AG04450 (cell line): ENCODE measurements at regions of chr18 and their contacts with region 1.

Region 1: DNA sequence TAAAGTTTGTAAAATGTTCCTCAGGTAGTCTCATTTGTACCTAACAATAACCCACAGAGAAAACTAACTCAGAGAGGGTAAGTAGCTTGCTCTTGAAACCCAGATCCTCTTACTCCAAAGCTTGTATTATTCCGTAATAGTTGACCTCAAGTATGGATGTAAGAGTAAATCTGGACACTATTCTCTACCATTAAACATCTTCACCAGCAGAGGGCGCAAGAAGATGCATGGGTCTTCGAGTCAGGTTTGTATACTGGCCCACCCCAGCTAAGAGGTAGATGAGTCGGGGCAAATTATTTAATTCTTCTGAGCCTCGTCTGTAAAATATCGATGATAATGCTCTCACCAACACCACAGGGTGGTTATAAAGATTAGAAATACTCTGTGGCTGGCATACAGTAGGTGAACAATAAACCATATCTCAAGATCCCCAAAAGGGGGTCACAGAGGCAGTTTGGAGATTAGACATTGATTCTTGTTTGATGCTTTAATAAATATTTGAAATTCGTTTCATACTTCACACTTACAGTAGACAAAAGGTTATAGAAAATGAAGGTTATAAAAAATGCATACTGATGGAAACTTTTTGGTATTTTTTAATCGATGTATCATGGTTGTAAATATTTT is 3.5 kb upstream of the CABLES1 start:
- DNase-seq: peak; percentile 56
- H3K4me3 ChIP-seq: no peak overlapping the region
- H3K27ac ChIP-seq: no peak overlapping the region
- H3K27me3 ChIP-seq: no peaks in the 10 kb centered on the region
- CTCF ChIP-seq: peak; percentile 80

Region 2: DNA sequence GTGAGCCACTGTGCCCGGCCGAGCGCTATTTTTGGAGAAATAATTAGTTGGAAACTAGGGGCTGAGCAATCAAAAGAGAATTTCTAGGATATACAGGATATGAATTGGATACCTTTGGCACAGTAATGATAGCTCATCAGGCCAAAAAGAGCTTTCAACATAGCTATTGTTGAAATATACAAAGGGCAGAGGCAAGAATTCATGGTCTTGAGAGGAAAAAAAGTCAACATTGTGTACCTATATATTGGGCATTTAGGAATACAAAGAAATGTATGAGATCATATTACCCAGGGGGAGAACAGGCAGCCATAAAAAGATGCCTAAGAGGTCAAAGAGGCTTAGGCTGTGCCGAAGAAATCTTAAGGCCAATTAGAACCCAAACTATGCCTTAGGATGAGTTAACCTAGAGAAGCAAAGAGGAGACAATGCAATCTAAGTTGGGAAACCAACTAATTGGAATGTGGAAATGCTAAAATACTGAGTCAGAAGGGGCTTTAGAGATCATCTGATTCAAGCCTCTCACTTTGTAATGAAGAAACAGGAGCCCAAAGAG is 99.7 kb before region 1 on chr18:
- CTCF ChIA-PET with region 1: interaction called, 30 read pairs
- POLR2A ChIA-PET with region 1: no interaction called
- DNase-seq: peak; percentile 58
- H3K4me3 ChIP-seq: no peak overlapping the region
- H3K27ac ChIP-seq: peak overlapping the region; percentile 81
- H3K27me3 ChIP-seq: no peaks in the 10 kb centered on the region
- CTCF ChIP-seq: no peak

Region 3: DNA sequence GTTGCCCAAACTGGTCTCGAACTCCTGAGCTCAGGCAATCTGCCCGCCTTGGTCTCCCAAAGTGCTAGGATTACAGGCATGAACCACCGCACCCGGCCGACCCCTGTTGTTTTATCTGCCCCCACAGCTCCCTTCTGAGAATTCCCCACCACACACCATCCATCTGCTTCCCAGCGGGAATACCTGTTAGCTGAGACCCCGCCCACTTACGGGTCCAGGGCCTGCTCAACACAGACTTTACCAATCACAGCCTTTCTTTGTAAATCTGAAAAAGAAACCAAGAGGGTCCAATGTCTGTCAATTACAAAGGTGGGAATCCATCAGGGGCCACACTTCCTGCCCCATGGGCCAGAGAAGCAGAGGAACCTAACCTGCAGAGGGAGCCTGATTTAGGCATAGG is 10.7 kb before region 1 on chr18:
- CTCF ChIA-PET with region 1: interaction called, 30 read pairs
- POLR2A ChIA-PET with region 1: no interaction called
- DNase-seq: no peak
- H3K4me3 ChIP-seq: no peak overlapping the region
- H3K27ac ChIP-seq: no peak overlapping the region
- H3K27me3 ChIP-seq: no peaks in the 10 kb centered on the region
- CTCF ChIP-seq: no peak

Region 4: GRCh38 chr18:23283916-23284430 is 152.2 kb after region 1 on chr18:
- CTCF ChIA-PET with region 1: no interaction called
- POLR2A ChIA-PET with region 1: no interaction called
- DNase-seq: no peak
- H3K4me3 ChIP-seq: no peak overlapping the region
- H3K27ac ChIP-seq: no peak overlapping the region
- H3K27me3 ChIP-seq: no peaks in the 10 kb centered on the region
- CTCF ChIP-seq: no peak

Region 5: GRCh38 chr18:23377669-23378301 is 246.0 kb after region 1 on chr18:
- CTCF ChIA-PET with region 1: interaction called, 36 read pairs
- POLR2A ChIA-PET with region 1: interaction called, 3 read pairs
- DNase-seq: peak; percentile 54
- H3K4me3 ChIP-seq: no peak overlapping the region
- H3K27ac ChIP-seq: peak overlapping the region; percentile 85
- H3K27me3 ChIP-seq: no peaks in the 10 kb centered on the region
- CTCF ChIP-seq: no peak

Region 6: GRCh38 chr18:23416298-23416697 is 284.5 kb after region 1 on chr18:
- CTCF ChIA-PET with region 1: interaction called, 39 read pairs
- POLR2A ChIA-PET with region 1: no interaction called
- DNase-seq: no peak
- H3K4me3 ChIP-seq: no peak overlapping the region
- H3K27ac ChIP-seq: no peak overlapping the region
- H3K27me3 ChIP-seq: no peaks in the 10 kb centered on the region
- CTCF ChIP-seq: no peak